HCT116 (cell line): ENCODE measurements at regions of chr14 and their contacts with region 1.

Region 1: GRCh38 chr14:106163306-106163705 is 636.9 kb downstream of the TMEM121 start:
- DNase-seq: no peak
- ATAC-seq: no peak
- H3K4me3 ChIP-seq: no peak overlapping the region
- H3K27ac ChIP-seq: no peak overlapping the region
- H3K4me1 ChIP-seq: no peaks in the 10 kb centered on the region
- H3K27me3 ChIP-seq: no peaks in the 10 kb centered on the region
- CTCF ChIP-seq: no peak
- POLR2A ChIP-seq: no peak
- RAD21 ChIP-seq: no peak

Region 2: GRCh38 chr14:105537369-105538164 is 625.7 kb before region 1 on chr14:
- CTCF ChIA-PET with region 1: no interaction called
- POLR2A ChIA-PET with region 1: no interaction called
- RAD21 ChIA-PET with region 1: no interaction called
- intact Hi-C with region 1: loop called (anchors 10 kb)
- DNase-seq: no peak
- ATAC-seq: peak; percentile 95
- H3K4me3 ChIP-seq: peak overlapping the region in 1 of 2 experiments; percentile 23; a peak in 1 of 4 replicates
- H3K27ac ChIP-seq: no peak overlapping the region
- H3K4me1 ChIP-seq: peaks cover 0 to 3% of the 10 kb centered on the region in 2 experiments; a peak in 1 of 4 replicates
- H3K27me3 ChIP-seq: no peaks in the 10 kb centered on the region
- CTCF ChIP-seq: peak; percentile 63 to 96 (median 89); a peak in 5 of 6 replicates
- POLR2A ChIP-seq: no peak
- RAD21 ChIP-seq: peak; percentile 67